A673 (cell line): ENCODE measurements at regions of chr16 and their contacts with region 1.

Region 1: GRCh38 chr16:72266836-72267235 is 94.9 kb upstream of the PMFBP1 start:
- DNase-seq: no peak
- H3K4me3 ChIP-seq: no peak overlapping the region
- H3K27ac ChIP-seq: no peak overlapping the region
- H3K4me1 ChIP-seq: no peaks in the 10 kb centered on the region
- H3K27me3 ChIP-seq: no peaks in the 10 kb centered on the region
- CTCF ChIP-seq: no peak

Region 2: DNA sequence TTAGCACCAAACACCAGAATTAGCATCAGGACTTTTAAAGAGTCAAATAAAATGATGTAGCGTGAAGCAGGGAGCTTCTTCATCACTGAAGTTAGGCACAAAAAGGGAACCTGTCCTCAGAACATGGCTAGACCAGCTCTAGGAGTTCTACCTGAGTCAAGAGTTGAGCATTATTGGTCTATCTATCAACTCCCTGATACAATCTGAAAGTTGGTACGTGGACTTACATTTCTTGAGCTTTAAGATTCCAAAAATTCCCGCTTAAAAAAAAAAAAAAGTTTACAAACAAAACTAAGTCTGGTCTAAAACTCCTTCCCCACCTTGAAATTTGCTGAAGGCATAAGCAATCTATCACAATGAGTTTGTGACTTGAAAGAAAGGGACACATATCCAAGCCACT is 837.3 kb before region 1 on chr16:
- CTCF ChIA-PET with region 1: interaction called, 12 read pairs
- POLR2A ChIA-PET with region 1: no interaction called
- intact Hi-C with region 1: no loop called
- DNase-seq: no peak
- H3K4me3 ChIP-seq: no peak overlapping the region
- H3K27ac ChIP-seq: no peak overlapping the region
- H3K4me1 ChIP-seq: no peaks in the 10 kb centered on the region
- H3K27me3 ChIP-seq: peaks cover 54% of the 10 kb centered on the region
- CTCF ChIP-seq: no peak